ENCODE measurements at regions of chr2 and their contacts with region 1.

Region 1: DNA sequence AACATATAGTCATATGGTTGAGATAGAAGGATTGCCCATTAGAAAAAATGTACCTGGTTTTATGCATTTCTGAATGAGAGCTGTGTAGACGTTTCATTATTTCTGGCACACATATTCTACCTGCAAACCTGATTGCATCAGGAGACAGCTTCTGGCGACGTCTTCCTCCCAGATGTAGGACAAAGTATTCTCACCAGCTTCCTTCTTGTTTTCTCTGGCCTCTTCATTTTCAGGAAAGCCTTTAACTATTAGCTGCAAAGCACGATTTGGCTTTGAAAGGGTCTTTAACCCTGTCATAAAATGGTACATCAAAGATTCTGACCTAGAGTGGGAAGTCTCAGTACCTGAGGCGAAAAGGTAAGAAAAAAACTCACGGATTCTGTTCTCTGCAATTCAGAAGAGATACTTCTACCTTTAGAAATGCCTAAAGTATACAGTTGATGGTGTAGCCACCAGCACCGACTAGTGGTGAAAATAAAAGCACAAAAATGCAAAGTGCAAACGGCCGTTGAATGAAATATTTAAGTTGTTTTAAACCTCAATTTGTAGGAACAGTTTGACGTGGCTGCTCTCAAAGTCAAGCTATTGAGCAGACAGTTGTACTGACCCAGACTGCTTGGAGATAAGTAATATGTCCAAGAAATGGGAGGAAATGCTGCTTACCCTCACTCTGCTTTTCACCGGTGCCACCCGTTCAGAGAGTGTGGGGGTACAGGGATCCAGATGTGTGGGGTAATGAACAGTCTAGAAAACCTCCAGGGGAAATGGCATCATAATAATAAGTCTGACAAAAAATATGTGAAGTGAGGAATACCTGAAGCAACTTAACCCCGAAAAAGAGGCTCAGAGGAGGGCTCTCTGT is 20.2 kb downstream of the IL18RAP start:
- DNase-seq: peak; percentile 30
- ATAC-seq: peak; percentile 83
- H3K4me3 ChIP-seq: no peak overlapping the region
- H3K27ac ChIP-seq: no peak overlapping the region
- H3K4me1 ChIP-seq: no peaks in the 10 kb centered on the region
- H3K27me3 ChIP-seq: peaks cover 0 to 14% of the 10 kb centered on the region in 2 experiments; a peak in 1 of 5 replicates
- CTCF ChIP-seq: peak; percentile 76
- EP300 ChIP-seq: no peak
- POLR2A ChIP-seq: no peak
- RAD21 ChIP-seq: 0 out of 2 replicates have a peak, but pooled peaks have one; percentile 34

Region 2: DNA sequence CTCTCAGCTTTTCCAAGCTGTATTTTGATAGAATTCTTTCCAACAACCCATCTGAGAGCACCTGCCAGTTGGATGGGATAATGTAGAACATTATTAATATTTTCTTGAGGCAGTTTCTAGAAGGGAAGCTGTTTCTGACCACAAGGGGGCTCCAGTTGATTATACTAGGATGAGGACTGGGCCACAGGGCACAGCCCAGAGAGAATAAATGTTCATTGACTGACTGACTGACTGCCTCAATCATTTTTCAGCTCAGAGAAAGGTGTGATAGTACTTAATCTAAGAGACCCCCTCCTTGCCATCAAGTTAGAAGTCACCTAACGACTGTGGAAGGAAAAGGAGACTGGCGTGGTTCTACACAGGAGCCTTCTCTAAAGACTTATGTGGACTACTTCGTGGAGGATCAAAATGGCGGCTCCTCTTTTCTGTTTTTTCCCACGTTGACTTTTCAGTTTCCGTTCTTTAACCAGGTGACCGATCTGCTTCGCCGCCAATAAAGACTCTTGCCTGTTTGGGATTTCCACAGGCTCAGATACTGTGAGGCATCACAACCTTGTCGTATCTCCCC is 1024.0 kb before region 1 on chr2:
- CTCF ChIA-PET with region 1: no interaction called
- POLR2A ChIA-PET with region 1: no interaction called
- in situ Hi-C with region 1: no loop called
- intact Hi-C with region 1: loop called (anchors 10 kb)
- DNase-seq: peak; percentile 71
- ATAC-seq: peak; percentile 85
- H3K4me3 ChIP-seq: no peak overlapping the region
- H3K27ac ChIP-seq: no peak overlapping the region
- H3K4me1 ChIP-seq: no peaks in the 10 kb centered on the region
- H3K27me3 ChIP-seq: peaks cover 3 to 21% of the 10 kb centered on the region in 2 experiments; a peak in 4 of 5 replicates
- CTCF ChIP-seq: peak; percentile 78
- EP300 ChIP-seq: no peak
- POLR2A ChIP-seq: no peak
- RAD21 ChIP-seq: peak; percentile 81

Region 3: GRCh38 chr2:102235491-102235890 is 207.7 kb before region 1 on chr2:
- CTCF ChIA-PET with region 1: no interaction called
- POLR2A ChIA-PET with region 1: no interaction called
- in situ Hi-C with region 1: no loop called
- intact Hi-C with region 1: loop called (anchors 2 kb)
- DNase-seq: peak; percentile 61
- ATAC-seq: peak; percentile 94
- H3K4me3 ChIP-seq: peak overlapping the region in 1 of 3 experiments; percentile 10; a peak in 1 of 6 replicates
- H3K27ac ChIP-seq: no peak overlapping the region
- H3K4me1 ChIP-seq: peaks cover 59% of the 10 kb centered on the region
- H3K27me3 ChIP-seq: no peaks in the 10 kb centered on the region
- CTCF ChIP-seq: peak; percentile 80
- EP300 ChIP-seq: no peak
- POLR2A ChIP-seq: no peak
- RAD21 ChIP-seq: peak; percentile 82

Region 4: DNA sequence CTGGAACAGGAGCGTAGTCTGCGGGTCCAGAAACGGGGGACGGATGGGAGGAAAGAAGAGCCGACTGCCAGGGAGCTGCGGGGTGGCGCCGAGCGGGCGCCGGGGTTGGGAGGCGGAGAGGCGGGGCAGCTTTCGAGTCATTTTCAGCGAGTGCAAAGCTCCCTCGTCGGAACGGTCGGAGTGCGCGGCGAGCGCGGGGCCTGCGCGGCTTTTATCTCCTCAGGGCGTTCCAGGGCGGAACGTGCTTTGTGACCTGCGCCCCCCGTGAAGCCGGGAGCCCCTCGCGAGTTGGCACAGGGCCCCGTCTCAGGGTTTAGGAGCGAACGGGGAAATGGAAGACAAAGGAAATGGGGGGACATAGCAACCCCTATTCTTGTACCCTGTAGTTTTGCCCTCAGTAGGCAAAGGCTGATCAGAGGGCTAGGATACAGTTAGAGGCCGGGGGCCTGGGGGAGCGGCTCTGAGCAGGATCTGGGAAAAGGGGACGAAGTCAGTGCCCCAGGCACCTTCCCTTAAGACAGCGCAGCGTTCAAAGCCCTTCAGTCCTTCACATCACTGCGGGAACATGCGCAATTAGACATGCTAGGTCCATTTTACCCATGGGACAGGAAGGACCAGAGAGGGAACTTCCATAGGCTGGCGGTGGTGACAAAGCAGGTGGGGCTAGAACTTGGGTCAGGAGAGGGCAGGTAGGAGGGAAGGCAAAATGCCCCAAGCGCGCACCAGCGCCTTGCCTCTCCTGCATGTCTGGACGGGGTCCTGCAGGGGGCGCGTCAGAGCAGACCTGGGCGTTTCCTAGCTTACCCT is 192.0 kb before region 1 on chr2:
- CTCF ChIA-PET with region 1: interaction called, 3 read pairs
- POLR2A ChIA-PET with region 1: no interaction called
- in situ Hi-C with region 1: loop called (anchors 5 kb)
- intact Hi-C with region 1: loop called (anchors 5 kb)
- DNase-seq: peak; percentile 38
- ATAC-seq: peak; percentile 95
- H3K4me3 ChIP-seq: peak overlapping the region; percentile 15 to 76 (median 61)
- H3K27ac ChIP-seq: no peak overlapping the region
- H3K4me1 ChIP-seq: peaks cover 7% of the 10 kb centered on the region
- H3K27me3 ChIP-seq: peaks cover 2 to 47% of the 10 kb centered on the region in 2 experiments; a peak in 4 of 5 replicates
- CTCF ChIP-seq: peak; percentile 85
- EP300 ChIP-seq: peak in 1 of 2 experiments; percentile 17; a peak in 1 of 4 replicates
- POLR2A ChIP-seq: no peak
- RAD21 ChIP-seq: no peak

Region 5: GRCh38 chr2:102355526-102356380 is 87.4 kb before region 1 on chr2 and contains the start of gene IL18R1:
- CTCF ChIA-PET with region 1: no interaction called
- POLR2A ChIA-PET with region 1: no interaction called
- in situ Hi-C with region 1: no loop called
- intact Hi-C with region 1: loop called (anchors 2 kb)
- DNase-seq: peak; percentile 53
- ATAC-seq: peak; percentile 100
- H3K4me3 ChIP-seq: peak within 1 kb of the TSS; percentile 55 to 77 (median 70)
- H3K27ac ChIP-seq: no peak within 1 kb of the TSS
- H3K4me1 ChIP-seq: no peaks in the 10 kb centered on the region; the same call in 1 of the 2 replicates
- H3K27me3 ChIP-seq: peaks cover 2 to 18% of the 10 kb centered on the region in 2 experiments; a peak in 4 of 5 replicates
- CTCF ChIP-seq: peak; percentile 90
- EP300 ChIP-seq: no peak
- POLR2A ChIP-seq: no peak
- RAD21 ChIP-seq: peak; percentile 94
- total RNA-seq, gene IL18R1: 0.04 TPM in 1 of 2 replicates, not detected in the other